HEK293T (cell line): ENCODE measurements at regions of chr7 and their contacts with region 1.

Region 1: DNA sequence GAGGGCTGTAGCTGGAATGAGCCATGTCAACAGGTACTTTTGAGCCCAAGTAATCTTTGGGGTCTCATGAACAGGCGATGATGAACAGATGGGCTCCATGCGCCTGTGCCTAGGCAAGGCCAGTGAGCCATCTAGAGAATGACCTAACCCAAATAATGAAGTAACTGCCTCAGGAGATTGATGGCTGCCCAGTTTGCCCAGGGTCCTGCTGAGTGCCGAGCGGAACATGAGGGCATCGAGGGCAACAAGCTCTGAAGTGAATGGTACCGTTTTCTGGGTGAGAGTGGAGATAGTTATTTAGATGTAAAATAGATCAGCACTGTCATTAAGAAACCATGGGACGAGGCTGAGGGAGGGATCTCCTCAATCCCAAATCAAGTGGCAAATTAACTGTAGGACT is 77.9 kb downstream of the EZH2 start:
- DNase-seq: no peak

Region 2: GRCh38 chr7:148492157-148492860 is 313.9 kb before region 1 on chr7:
- CTCF ChIA-PET with region 1: no interaction called
- POLR2A ChIA-PET with region 1: no interaction called
- DNase-seq: no peak

Region 3: DNA sequence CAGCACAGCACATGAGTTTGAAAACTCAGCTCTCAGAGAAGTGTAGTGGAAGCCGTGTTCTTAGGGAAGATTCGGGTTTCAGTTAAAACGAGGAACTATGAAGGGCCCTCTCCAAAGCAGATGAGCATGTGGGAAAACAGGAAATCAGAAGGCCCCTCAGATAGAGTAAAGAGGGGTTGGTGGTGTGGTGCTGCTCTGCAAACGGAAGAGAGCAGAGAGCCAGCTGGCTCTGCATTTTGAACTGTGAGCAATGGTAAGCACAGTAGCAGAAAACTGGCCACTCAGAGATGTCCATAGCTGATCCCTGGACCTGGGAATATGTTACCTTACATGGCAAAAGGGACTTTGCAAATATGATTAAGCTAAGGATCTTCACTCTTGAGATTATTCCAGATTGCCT is 135.4 kb before region 1 on chr7:
- CTCF ChIA-PET with region 1: no interaction called
- POLR2A ChIA-PET with region 1: no interaction called
- DNase-seq: no peak

Region 4: GRCh38 chr7:148787571-148788295 is 18.5 kb before region 1 on chr7:
- CTCF ChIA-PET with region 1: no interaction called
- POLR2A ChIA-PET with region 1: no interaction called
- DNase-seq: no peak

Region 5: DNA sequence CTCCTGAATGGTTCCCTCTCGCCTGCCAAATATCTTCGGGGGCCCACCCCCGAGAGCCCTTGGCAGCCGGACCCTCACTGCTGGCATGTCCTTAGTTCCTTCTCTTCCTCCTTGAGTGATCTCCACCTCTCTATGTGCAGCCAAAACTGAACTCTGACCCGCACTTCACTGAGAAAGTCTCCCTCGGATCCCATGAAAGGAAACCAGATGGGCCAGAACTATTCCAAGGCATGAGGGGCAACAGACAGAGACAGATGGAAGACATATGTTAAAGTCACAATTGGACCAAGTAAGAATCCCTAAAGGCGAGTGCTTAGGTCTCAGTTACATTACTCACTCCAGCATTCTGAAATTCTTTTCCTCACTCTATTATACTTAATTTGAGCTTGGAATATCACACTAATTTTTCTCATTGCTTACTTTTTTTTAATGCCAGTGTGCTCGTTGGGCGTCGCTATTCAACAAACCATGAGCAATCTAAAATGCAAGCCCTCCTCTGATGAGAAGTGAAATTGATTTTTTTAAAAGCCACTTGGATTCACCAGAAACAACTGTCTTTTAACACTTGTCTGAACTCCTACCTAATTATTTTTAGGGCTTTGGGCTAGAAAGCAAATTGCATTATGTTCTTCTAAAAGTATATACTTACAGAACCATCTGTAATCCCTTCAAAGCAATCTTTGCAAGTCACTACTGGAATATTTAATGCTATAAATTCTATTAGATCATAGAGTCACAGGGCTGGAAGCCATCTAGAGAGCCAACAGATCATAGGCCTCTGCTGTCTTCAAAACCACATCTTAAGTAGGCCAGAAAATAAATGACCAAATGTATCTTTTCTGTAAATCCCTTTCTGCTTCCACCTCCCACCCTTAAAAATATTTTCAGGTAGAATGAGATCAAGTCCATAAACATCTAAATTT is 121.2 kb after region 1 on chr7:
- CTCF ChIA-PET with region 1: no interaction called
- POLR2A ChIA-PET with region 1: no interaction called
- DNase-seq: no peak

Region 6: DNA sequence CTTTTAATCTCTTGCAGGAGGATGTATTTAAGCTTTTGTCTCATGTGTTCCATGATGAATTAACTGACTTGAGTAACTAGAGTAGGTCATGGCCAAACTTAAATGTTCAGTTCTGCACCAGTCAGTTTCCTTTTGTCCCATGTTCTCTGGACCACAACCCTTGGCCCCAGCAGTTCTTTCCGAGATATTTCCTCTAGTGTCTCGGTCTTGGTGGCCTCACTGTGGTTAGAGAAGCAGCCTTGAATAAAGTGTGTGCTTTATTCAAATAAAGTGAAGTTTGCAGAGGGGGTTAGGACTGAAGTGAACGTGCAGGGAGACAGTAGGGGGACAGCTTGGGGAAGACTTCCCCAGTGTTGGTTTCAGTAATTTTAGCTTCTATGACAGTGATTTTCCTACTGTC is 442.6 kb after region 1 on chr7:
- CTCF ChIA-PET with region 1: interaction called, 10 read pairs
- POLR2A ChIA-PET with region 1: no interaction called
- DNase-seq: no peak